ENCODE measurements at regions of chr12 and their contacts with region 1.

Region 1: GRCh38 chr12:72570602-72571001 is 298.4 kb downstream of the TRHDE start:
- H3K4me3 Mint-ChIP-seq: no peak overlapping the region
- H3K27ac Mint-ChIP-seq: no peak overlapping the region
- H3K4me1 Mint-ChIP-seq: no peaks in the 10 kb centered on the region
- H3K27me3 Mint-ChIP-seq: no peaks in the 10 kb centered on the region

Region 2: GRCh38 chr12:72790273-72790672 is 219.7 kb after region 1 on chr12:
- intact Hi-C with region 1: loop called (anchors 10 kb)
- H3K4me3 Mint-ChIP-seq: no peak overlapping the region
- H3K27ac Mint-ChIP-seq: no peak overlapping the region
- H3K4me1 Mint-ChIP-seq: peaks cover 3% of the 10 kb centered on the region
- H3K27me3 Mint-ChIP-seq: no peaks in the 10 kb centered on the region